Ovary (tissue), 10 donors: ENCODE measurements at regions of chr17 and their contacts with region 1.

Region 1: GRCh38 chr17:49779739-49780231 is 8.7 kb upstream of the KAT7 start:
- DNase-seq: peak in 2 of 5 donors; percentile 20 to 52
- H3K4me3 ChIP-seq: no peak overlapping the region
- H3K27ac ChIP-seq: no peak overlapping the region
- H3K4me1 ChIP-seq: peaks cover 4% of the 10 kb centered on the region
- H3K27me3 ChIP-seq: no peaks in the 10 kb centered on the region
- CTCF ChIP-seq: peak in 2 of 3 donors; percentile 59 to 66
- EP300 ChIP-seq: no peak
- POLR2A ChIP-seq: no peak

Region 2: GRCh38 chr17:49723423-49723822 is 56.4 kb before region 1 on chr17:
- intact Hi-C with region 1: loop called in 1 of 4 experiments (anchors 10 kb)
- DNase-seq: peak; percentile 79 to 91 (median 86)
- H3K4me3 ChIP-seq: no peak overlapping the region
- H3K27ac ChIP-seq: peak overlapping the region in 1 of 2 donors; percentile 71
- H3K4me1 ChIP-seq: peaks cover 18% of the 10 kb centered on the region
- H3K27me3 ChIP-seq: no peaks in the 10 kb centered on the region
- CTCF ChIP-seq: no peak
- EP300 ChIP-seq: no peak
- POLR2A ChIP-seq: no peak

Region 3: GRCh38 chr17:49873466-49873865 is 93.7 kb after region 1 on chr17:
- intact Hi-C with region 1: no loop called
- DNase-seq: no peak
- H3K4me3 ChIP-seq: no peak overlapping the region
- H3K27ac ChIP-seq: no peak overlapping the region
- H3K4me1 ChIP-seq: no peaks in the 10 kb centered on the region
- H3K27me3 ChIP-seq: no peaks in the 10 kb centered on the region
- CTCF ChIP-seq: no peak
- EP300 ChIP-seq: no peak
- POLR2A ChIP-seq: no peak